MCF 10A (cell line): ENCODE measurements at regions of chr16 and their contacts with region 1.

Region 1: DNA sequence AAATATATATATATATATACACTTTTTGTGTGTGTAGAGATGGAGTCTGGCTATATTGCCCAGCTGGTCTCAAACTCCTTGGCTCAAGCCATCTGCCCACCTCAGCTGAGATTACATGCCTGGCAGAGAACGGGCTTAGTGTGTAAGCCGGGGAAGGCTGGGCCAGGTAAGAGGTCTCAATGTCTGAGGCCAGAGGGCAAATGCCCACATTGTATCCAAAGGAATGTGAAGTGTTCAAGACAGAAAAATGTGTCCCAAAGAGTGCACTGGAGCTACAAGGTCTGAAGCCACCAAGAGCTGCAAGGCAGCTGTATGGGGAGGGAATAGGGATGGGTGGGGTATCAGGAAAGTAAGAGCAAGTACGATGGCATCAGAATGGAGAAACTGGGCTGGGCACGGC is 8.8 kb downstream of the CD2BP2 start:
- DNase-seq: no peak
- H3K4me3 Mint-ChIP-seq: no peak overlapping the region
- H3K27ac Mint-ChIP-seq: no peak overlapping the region
- H3K4me1 Mint-ChIP-seq: no peaks in the 10 kb centered on the region
- H3K27me3 Mint-ChIP-seq: no peaks in the 10 kb centered on the region
- CTCF ChIP-seq: no peak

Region 2: GRCh38 chr16:30335598-30336474 is 10.5 kb before region 1 on chr16:
- CTCF ChIA-PET with region 1: no interaction called
- POLR2A ChIA-PET with region 1: interaction called, 12 read pairs
- intact Hi-C with region 1: no loop called
- DNase-seq: peak; percentile 72
- H3K4me3 Mint-ChIP-seq: peak overlapping the region; percentile 99
- H3K27ac Mint-ChIP-seq: peak overlapping the region; percentile 83
- H3K4me1 Mint-ChIP-seq: peaks cover 8% of the 10 kb centered on the region
- H3K27me3 Mint-ChIP-seq: no peaks in the 10 kb centered on the region
- CTCF ChIP-seq: no peak

Region 3: DNA sequence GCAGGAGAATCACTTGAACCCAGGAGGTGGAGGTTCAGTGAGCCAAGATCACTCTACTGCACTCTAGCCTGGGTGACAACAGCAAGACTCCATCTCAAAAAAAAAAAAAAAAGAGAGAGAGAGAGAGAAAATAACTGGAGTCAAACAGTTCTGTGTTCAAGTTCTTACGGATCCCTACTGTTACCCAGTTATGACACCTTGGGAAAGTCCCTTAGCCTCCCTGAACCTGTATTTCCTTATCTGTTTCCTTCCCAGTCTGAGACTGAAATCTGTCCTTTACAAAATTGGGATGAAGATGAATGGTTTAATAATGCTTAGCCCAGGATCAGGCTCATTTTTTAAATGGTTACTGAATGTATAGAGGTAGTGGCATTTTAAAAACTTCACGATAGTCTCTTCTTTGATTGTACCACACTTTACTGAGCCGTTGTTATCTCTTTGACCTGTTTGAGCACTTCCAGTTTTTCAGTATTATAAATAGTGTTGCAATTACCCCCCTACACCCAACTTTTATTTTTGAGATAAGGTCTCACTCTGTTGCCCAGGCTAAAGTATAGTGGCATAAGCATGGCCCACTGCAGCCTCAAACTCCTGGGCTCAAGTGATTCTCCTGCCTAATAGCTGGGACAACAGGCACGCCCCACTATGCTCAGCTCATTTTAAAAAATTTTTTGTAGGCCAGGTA is 162.9 kb after region 1 on chr16:
- CTCF ChIA-PET with region 1: no interaction called
- POLR2A ChIA-PET with region 1: no interaction called
- intact Hi-C with region 1: no loop called
- DNase-seq: no peak
- H3K4me3 Mint-ChIP-seq: no peak overlapping the region
- H3K27ac Mint-ChIP-seq: no peak overlapping the region
- H3K4me1 Mint-ChIP-seq: no peaks in the 10 kb centered on the region
- H3K27me3 Mint-ChIP-seq: no peaks in the 10 kb centered on the region
- CTCF ChIP-seq: no peak